H1 (cell line): ENCODE measurements at regions of chr21 and their contacts with region 1.

Region 1: GRCh38 chr21:33360881-33361602 is 36.3 kb downstream of the IFNAR1 start:
- DNase-seq: peak; percentile 65 to 96
- H3K4me3 ChIP-seq: peak overlapping the region in 1 of 4 experiments; percentile 47; a peak in 2 of 8 replicates
- H3K27ac ChIP-seq: no peak overlapping the region; the same call in 1 of the 2 replicates
- H3K4me1 ChIP-seq: peaks cover 0 to 14% (median 8%) of the 10 kb centered on the region in 4 experiments; a peak in 6 of 7 replicates
- H3K27me3 ChIP-seq: no peaks in the 10 kb centered on the region
- CTCF ChIP-seq: peak; percentile 88 to 99 (median 98)
- EP300 ChIP-seq: 0 out of 3 replicates have a peak, but pooled peaks of 1 of the 2 experiments have one; percentile 25
- POLR2A ChIP-seq: peak in 1 of 2 experiments; percentile 51; a peak in 1 of 3 replicates
- RAD21 ChIP-seq: peak; percentile 69 to 70

Region 2: GRCh38 chr21:33332143-33332542 is 28.9 kb before region 1 on chr21:
- CTCF ChIA-PET with region 1: interaction called, 17 read pairs
- POLR2A ChIA-PET with region 1: interaction called, 3 read pairs
- DNase-seq: no peak
- H3K4me3 ChIP-seq: no peak overlapping the region
- H3K27ac ChIP-seq: no peak overlapping the region
- H3K4me1 ChIP-seq: no peaks in the 10 kb centered on the region
- H3K27me3 ChIP-seq: no peaks in the 10 kb centered on the region
- CTCF ChIP-seq: no peak
- EP300 ChIP-seq: no peak
- POLR2A ChIP-seq: no peak
- RAD21 ChIP-seq: no peak

Region 3: GRCh38 chr21:33374450-33375096 is 13.5 kb after region 1 on chr21:
- CTCF ChIA-PET with region 1: interaction called, 14 read pairs
- POLR2A ChIA-PET with region 1: interaction called, 12 read pairs
- DNase-seq: no peak
- H3K4me3 ChIP-seq: no peak overlapping the region
- H3K27ac ChIP-seq: no peak overlapping the region
- H3K4me1 ChIP-seq: peaks cover 0 to 2% (median 0%) of the 10 kb centered on the region in 4 experiments; a peak in 1 of 7 replicates
- H3K27me3 ChIP-seq: no peaks in the 10 kb centered on the region
- CTCF ChIP-seq: peak; percentile 35 to 70 (median 58)
- EP300 ChIP-seq: no peak
- POLR2A ChIP-seq: no peak
- RAD21 ChIP-seq: peak; percentile 79 to 85

Region 4: GRCh38 chr21:33396947-33397346 is 35.9 kb after region 1 on chr21:
- CTCF ChIA-PET with region 1: interaction called, 13 read pairs
- POLR2A ChIA-PET with region 1: interaction called, 6 read pairs
- DNase-seq: no peak
- H3K4me3 ChIP-seq: no peak overlapping the region
- H3K27ac ChIP-seq: no peak overlapping the region
- H3K4me1 ChIP-seq: 0 out of 7 replicates have a peak, but pooled peaks cover 0 to 2% (median 0%) of the 10 kb centered on the region in 4 experiments
- H3K27me3 ChIP-seq: no peaks in the 10 kb centered on the region
- CTCF ChIP-seq: no peak
- EP300 ChIP-seq: no peak
- POLR2A ChIP-seq: no peak
- RAD21 ChIP-seq: no peak

Region 5: DNA sequence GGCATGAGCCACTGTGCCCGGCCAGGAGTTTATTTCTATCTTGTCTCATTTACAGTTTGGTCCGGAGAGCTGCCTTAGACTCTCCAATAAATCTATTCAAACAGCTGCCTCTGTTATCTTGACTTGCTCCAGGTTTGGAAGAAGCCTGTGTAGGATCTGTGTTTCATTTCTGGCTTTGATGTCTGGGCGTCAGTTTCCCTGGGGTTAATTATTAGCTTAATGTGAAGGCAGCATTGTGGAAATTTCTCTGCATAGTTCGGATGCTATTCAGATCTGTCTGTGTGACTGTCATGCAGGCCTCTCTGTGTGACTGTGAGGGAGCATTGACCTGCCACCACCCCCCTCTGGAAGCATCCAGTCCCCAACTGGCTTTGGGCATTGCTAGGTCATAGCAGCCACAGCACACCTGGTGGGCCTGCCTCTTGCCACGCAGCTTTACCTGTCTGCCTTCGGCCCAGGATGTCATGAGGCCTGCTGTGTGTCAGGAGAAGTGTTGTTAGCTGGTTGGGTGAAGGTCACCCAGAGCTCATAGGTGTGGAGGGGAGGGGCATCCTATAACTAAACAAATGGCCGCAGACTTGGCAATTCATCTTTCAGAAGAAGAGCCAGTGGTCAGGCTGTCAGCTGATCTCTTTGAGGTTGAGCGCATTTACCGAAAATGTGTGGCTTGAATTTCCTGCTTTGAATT is 51.9 kb after region 1 on chr21:
- CTCF ChIA-PET with region 1: interaction called, 11 read pairs
- POLR2A ChIA-PET with region 1: interaction called, 5 read pairs
- DNase-seq: no peak
- H3K4me3 ChIP-seq: no peak overlapping the region
- H3K27ac ChIP-seq: no peak overlapping the region
- H3K4me1 ChIP-seq: peaks cover 4 to 13% (median 7%) of the 10 kb centered on the region in 4 experiments; a peak in 6 of 7 replicates
- H3K27me3 ChIP-seq: no peaks in the 10 kb centered on the region
- CTCF ChIP-seq: no peak
- EP300 ChIP-seq: no peak
- POLR2A ChIP-seq: no peak
- RAD21 ChIP-seq: no peak

Region 6: GRCh38 chr21:33510826-33511225 is 149.8 kb after region 1 on chr21:
- CTCF ChIA-PET with region 1: no interaction called
- POLR2A ChIA-PET with region 1: no interaction called
- DNase-seq: no peak
- H3K4me3 ChIP-seq: no peak overlapping the region
- H3K27ac ChIP-seq: no peak overlapping the region
- H3K4me1 ChIP-seq: no peaks in the 10 kb centered on the region
- H3K27me3 ChIP-seq: no peaks in the 10 kb centered on the region
- CTCF ChIP-seq: no peak
- EP300 ChIP-seq: no peak
- POLR2A ChIP-seq: no peak
- RAD21 ChIP-seq: no peak